GM12878 (cell line): ENCODE measurements at regions of chr6 and their contacts with region 1.

Region 1: DNA sequence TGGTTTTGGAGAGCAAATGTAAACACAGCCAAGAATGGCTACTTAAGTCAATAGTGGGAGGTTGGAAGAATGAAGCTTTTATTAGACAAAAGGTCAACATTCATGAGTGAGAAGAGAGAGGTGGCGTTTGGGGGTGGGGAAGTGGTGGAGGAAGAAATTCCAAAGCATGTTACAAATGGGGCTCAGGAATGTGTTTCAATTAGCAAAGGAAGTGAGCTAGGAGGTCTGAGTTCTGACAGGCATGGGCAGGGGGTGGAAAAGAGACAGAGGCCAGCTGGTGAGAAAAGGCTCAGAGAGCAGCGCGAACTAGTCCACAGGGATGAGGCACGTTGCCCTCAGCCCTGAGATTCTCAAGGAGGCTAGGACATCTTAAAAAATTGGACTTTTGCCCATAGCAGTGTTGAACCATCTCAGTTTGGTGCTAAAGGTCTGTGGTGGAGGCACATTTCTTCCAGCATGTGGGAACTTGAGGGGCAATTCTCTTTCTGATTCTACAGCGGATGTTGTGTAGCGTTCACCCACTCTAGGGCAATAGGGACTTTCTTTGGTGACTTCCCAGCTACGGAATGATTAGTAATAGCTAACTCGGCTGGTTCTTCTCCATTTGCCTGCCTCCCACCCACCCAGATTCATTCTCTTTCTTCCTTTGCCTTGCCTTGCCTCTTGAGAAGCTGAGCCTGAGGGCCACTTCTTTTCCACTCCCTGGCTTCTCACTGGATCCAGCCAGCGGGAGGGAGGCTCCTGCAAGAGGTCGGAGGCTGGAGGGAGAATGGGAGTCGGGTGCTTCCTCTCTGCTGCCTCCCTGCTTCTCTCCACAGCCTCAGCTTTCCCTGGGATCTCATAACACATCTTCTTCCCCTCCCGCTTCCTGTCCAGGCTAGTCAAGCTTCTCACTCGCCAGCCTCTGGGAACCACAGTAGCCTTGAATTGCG is 45.1 kb upstream of the NEDD9 start:
- DNase-seq: peak; percentile 94
- ATAC-seq: peak; percentile 78
- H3K4me3 ChIP-seq: peak overlapping the region; percentile 23; the same call in 1 of the 2 replicates
- H3K27ac ChIP-seq: peak overlapping the region; percentile 95
- H3K4me1 ChIP-seq: peaks cover 46% of the 10 kb centered on the region
- H3K27me3 ChIP-seq: no peaks in the 10 kb centered on the region
- CTCF ChIP-seq: no peak
- EP300 ChIP-seq: peak; percentile 65 to 83; a peak in 2 of 4 replicates
- POLR2A ChIP-seq: peak; percentile 55
- RAD21 ChIP-seq: peak; percentile 12; the same call in 1 of the 2 replicates

Region 2: GRCh38 chr6:11212625-11213024 is 64.9 kb before region 1 on chr6:
- CTCF ChIA-PET with region 1: no interaction called
- POLR2A ChIA-PET with region 1: no interaction called
- RAD21 ChIA-PET with region 1: interaction called, 6 read pairs
- SMC1A ChIA-PET with region 1: interaction called, 14 read pairs
- in situ Hi-C with region 1: no loop called
- intact Hi-C with region 1: no loop called
- DNase-seq: no peak
- ATAC-seq: no peak
- H3K4me3 ChIP-seq: no peak overlapping the region
- H3K27ac ChIP-seq: no peak overlapping the region
- H3K4me1 ChIP-seq: no peaks in the 10 kb centered on the region
- H3K27me3 ChIP-seq: no peaks in the 10 kb centered on the region
- CTCF ChIP-seq: no peak
- EP300 ChIP-seq: no peak
- POLR2A ChIP-seq: no peak
- RAD21 ChIP-seq: no peak

Region 3: DNA sequence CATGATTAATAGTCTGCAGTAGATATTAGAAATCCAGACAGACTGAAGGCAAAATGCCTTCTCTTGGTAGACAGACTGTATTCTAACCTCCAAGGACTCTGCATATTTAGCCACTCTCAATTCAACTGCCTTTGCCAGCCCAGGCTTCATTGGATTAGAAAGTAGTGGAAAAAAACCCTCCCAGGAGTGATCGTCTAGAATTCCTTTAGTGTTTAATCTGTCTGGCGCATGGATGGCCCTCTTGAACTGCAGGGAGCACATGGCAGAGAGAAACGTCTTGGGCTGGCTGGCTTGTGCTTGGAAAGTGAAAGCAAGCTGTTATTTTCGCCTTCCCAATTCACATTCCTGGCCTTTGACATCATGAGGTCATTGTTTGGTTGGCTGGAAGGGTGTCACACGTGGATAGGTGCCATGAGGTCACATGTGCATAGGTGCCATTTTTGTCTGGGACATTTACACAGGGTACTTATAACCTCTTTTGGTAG is 14.2 kb before region 1 on chr6:
- CTCF ChIA-PET with region 1: interaction called, 11 read pairs
- POLR2A ChIA-PET with region 1: interaction called, 16 read pairs
- RAD21 ChIA-PET with region 1: interaction called, 31 read pairs
- SMC1A ChIA-PET with region 1: interaction called, 100 read pairs
- in situ Hi-C with region 1: no loop called
- intact Hi-C with region 1: no loop called
- DNase-seq: no peak
- ATAC-seq: no peak
- H3K4me3 ChIP-seq: no peak overlapping the region
- H3K27ac ChIP-seq: no peak overlapping the region
- H3K4me1 ChIP-seq: peaks cover 10% of the 10 kb centered on the region
- H3K27me3 ChIP-seq: no peaks in the 10 kb centered on the region
- CTCF ChIP-seq: no peak
- EP300 ChIP-seq: no peak
- POLR2A ChIP-seq: no peak
- RAD21 ChIP-seq: no peak

Region 4: DNA sequence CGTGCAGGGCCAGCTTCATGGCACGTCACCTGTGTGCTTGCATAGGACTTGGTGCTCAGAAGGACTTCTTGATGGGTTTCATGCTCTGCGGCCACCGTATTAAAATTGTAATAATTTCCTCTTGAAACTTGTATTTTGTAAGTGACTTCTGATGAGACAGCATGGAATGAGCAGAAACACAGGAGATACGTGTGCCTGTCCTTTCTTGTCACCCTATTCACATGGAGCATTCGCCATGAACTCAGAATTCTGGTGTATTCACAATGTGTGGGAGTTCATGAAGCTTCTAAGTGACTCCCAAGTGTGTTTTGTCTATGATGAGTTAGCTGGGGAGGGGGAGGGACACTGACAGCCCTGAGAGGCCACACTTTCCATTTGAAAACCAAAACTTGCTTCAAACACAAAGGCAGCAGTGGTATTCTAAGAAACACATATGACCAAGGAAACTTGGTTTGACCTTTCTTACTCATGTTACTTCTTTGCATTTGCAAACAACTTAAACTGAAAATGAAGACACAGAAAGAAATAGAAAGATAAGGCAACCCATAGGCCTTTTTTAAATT is 47.0 kb after region 1 on chr6:
- CTCF ChIA-PET with region 1: interaction called, 5 read pairs
- POLR2A ChIA-PET with region 1: interaction called, 14 read pairs
- RAD21 ChIA-PET with region 1: interaction called, 66 read pairs
- SMC1A ChIA-PET with region 1: interaction called, 59 read pairs
- in situ Hi-C with region 1: no loop called
- intact Hi-C with region 1: loop called (anchors 5 kb)
- DNase-seq: peak; percentile 61
- ATAC-seq: peak; percentile 71
- H3K4me3 ChIP-seq: no peak overlapping the region
- H3K27ac ChIP-seq: peak overlapping the region; percentile 45
- H3K4me1 ChIP-seq: peaks cover 41% of the 10 kb centered on the region
- H3K27me3 ChIP-seq: no peaks in the 10 kb centered on the region
- CTCF ChIP-seq: no peak
- EP300 ChIP-seq: peak; percentile 57 to 76; a peak in 2 of 4 replicates
- POLR2A ChIP-seq: no peak
- RAD21 ChIP-seq: 0 out of 2 replicates have a peak, but pooled peaks have one; percentile 13

Region 5: GRCh38 chr6:11374036-11375010 is 96.8 kb after region 1 on chr6:
- CTCF ChIA-PET with region 1: interaction called, 3 read pairs
- POLR2A ChIA-PET with region 1: interaction called, 52 read pairs
- RAD21 ChIA-PET with region 1: interaction called, 108 read pairs
- SMC1A ChIA-PET with region 1: interaction called, 112 read pairs
- in situ Hi-C with region 1: no loop called
- intact Hi-C with region 1: loop called (anchors 2 kb)
- DNase-seq: peak; percentile 96
- ATAC-seq: peak; percentile 85
- H3K4me3 ChIP-seq: 0 out of 2 replicates have a peak overlapping the region, but pooled peaks have one; percentile 44
- H3K27ac ChIP-seq: peak overlapping the region; percentile 89
- H3K4me1 ChIP-seq: peaks cover 44% of the 10 kb centered on the region
- H3K27me3 ChIP-seq: no peaks in the 10 kb centered on the region
- CTCF ChIP-seq: no peak
- EP300 ChIP-seq: peak; percentile 83 to 95
- POLR2A ChIP-seq: peak; percentile 43; the same call in 1 of the 2 replicates
- RAD21 ChIP-seq: peak; percentile 25

Region 6: GRCh38 chr6:11467364-11467763 is 189.8 kb after region 1 on chr6:
- CTCF ChIA-PET with region 1: no interaction called
- POLR2A ChIA-PET with region 1: no interaction called
- RAD21 ChIA-PET with region 1: interaction called, 15 read pairs
- SMC1A ChIA-PET with region 1: interaction called, 25 read pairs
- in situ Hi-C with region 1: no loop called
- intact Hi-C with region 1: no loop called
- DNase-seq: peak; percentile 88
- ATAC-seq: peak; percentile 82
- H3K4me3 ChIP-seq: no peak overlapping the region
- H3K27ac ChIP-seq: peak overlapping the region; percentile 91
- H3K4me1 ChIP-seq: peaks cover 30% of the 10 kb centered on the region
- H3K27me3 ChIP-seq: no peaks in the 10 kb centered on the region
- CTCF ChIP-seq: no peak
- EP300 ChIP-seq: no peak
- POLR2A ChIP-seq: no peak
- RAD21 ChIP-seq: peak; percentile 25